ENCODE measurements at regions of chr2 and their contacts with region 1.

Region 1: GRCh38 chr2:68196120-68196716 is 38.5 kb downstream of the PNO1 start:
- DNase-seq: no peak
- CTCF ChIP-seq: peak; percentile 39

Region 2: DNA sequence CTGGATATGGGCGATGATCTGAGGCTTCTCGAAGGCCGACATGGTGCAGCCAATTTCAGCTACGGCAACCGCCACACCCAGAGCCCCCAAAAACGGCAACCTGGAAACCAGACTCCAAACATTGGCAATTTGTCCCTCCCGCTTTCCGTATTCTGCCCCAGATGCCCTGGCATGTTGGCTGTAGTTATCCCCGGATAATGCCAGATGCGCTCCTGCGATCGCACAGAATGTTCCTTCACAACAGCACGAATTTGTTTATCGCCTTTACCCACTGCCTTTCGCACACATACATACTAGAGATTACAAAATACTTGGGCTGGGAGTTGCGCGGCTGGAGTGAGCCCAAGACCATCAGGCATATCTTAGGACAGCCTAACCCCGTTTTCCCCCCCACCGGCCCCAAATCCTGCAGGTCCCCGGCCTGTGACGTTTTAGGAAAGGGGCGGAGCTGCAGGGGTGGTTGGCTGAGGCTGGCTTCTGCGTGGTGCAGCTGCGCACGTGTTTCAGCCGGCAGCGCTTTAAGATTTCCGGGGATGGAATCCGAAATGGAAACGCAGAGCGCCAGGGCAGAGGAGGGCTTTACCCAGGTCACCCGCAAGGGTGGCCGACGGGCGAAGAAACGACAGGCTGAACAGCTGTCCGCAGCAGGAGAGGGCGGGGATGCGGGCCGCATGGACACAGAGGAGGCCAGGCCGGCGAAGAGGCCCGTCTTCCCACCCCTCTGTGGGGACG is 38.6 kb before region 1 on chr2 and contains the start of gene PNO1:
- CTCF ChIA-PET with region 1: interaction called, 19 read pairs
- POLR2A ChIA-PET with region 1: no interaction called
- DNase-seq: peak; percentile 97
- CTCF ChIP-seq: no peak

Region 3: GRCh38 chr2:68176657-68177056 is 19.6 kb before region 1 on chr2:
- CTCF ChIA-PET with region 1: interaction called, 61 read pairs
- POLR2A ChIA-PET with region 1: no interaction called
- DNase-seq: no peak
- CTCF ChIP-seq: no peak

Region 4: DNA sequence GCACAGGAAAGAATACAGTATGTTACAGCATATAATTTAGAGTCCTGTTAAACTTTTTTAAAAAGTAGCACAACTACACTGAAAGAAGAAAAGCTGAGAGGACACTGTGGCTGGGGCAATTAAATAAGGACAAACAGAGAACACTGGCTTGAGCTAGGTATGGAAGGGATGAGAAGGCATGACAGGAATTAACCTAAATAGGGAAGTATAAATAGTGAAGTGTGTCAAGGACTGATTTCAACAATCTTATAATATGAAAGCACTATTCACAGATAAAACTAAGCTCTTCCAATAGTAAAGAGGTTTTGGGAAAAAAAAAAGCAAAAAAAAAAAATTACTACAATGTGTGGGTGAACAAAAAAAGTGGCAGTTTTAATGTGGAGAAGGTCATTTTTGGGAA is 10.6 kb after region 1 on chr2:
- CTCF ChIA-PET with region 1: interaction called, 58 read pairs
- POLR2A ChIA-PET with region 1: no interaction called
- DNase-seq: no peak
- CTCF ChIP-seq: no peak

Region 5: GRCh38 chr2:68225119-68225632 is 29.0 kb after region 1 on chr2:
- CTCF ChIA-PET with region 1: interaction called, 58 read pairs
- POLR2A ChIA-PET with region 1: no interaction called
- DNase-seq: peak; percentile 22
- CTCF ChIP-seq: peak; percentile 61

Region 6: DNA sequence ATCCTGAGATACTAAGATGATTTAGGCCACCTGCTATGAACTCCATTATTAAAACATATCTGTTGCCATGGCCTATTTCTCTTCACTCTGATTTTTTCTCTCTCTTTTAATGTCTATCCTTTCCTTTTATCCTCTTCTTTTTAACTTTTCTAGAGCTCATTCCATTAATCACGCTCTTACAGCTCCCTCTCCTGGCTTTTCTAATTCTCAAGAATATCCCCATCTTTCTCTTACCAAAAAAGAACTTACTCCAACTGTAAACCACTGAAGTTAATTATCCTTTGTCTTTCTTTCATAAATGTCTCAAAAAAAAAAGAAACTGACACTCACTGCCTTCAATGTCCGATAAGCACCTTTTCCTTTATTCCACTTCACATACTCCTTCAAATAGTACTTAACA is 48.2 kb after region 1 on chr2:
- CTCF ChIA-PET with region 1: interaction called, 12 read pairs
- POLR2A ChIA-PET with region 1: no interaction called
- DNase-seq: no peak
- CTCF ChIP-seq: no peak

Region 7: DNA sequence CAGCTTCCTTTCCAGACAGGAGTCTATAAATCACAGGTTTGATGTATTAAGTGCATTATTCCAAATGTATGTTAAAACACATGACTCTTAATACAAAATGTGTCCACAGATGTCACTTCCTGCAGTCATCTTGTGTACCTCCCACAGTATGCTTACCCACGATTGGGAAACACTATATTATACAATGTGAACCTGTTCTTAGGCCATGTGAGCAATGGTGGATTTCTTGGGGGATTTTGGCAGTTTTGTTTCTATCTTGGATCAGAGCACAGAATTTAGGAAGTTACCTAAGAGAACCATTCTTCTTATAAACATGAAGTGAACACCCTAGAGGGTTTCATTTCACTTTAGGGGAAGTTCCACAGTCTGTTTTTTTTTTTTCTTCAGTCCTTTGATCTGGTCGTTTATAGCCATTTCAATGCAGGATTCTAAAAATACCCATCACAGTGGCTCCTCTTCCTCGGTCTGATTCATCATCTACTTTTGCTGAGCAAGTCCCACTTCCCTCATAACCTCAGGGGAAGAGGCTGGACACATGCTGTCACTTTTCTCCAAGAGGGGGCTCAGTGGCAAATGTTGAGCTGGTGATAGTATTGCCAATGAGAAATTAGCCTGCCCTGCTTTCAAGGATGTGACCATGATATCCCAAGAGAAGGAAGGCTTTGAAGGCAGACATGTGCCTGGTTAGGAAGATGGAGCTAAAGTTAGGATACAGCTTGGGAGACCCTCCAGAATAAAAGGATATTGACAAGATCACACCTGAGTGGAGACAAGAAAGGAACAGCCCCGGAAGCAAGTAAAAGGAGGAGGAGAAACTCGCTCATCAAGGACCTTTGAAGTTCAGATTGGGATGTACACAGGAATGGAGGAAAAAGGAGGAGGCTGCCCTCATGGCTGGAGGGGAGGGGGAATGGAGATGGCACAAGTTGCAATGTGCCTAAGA is 191.5 kb after region 1 on chr2:
- CTCF ChIA-PET with region 1: no interaction called
- POLR2A ChIA-PET with region 1: no interaction called
- DNase-seq: peak; percentile 59
- CTCF ChIP-seq: no peak

Region 8: DNA sequence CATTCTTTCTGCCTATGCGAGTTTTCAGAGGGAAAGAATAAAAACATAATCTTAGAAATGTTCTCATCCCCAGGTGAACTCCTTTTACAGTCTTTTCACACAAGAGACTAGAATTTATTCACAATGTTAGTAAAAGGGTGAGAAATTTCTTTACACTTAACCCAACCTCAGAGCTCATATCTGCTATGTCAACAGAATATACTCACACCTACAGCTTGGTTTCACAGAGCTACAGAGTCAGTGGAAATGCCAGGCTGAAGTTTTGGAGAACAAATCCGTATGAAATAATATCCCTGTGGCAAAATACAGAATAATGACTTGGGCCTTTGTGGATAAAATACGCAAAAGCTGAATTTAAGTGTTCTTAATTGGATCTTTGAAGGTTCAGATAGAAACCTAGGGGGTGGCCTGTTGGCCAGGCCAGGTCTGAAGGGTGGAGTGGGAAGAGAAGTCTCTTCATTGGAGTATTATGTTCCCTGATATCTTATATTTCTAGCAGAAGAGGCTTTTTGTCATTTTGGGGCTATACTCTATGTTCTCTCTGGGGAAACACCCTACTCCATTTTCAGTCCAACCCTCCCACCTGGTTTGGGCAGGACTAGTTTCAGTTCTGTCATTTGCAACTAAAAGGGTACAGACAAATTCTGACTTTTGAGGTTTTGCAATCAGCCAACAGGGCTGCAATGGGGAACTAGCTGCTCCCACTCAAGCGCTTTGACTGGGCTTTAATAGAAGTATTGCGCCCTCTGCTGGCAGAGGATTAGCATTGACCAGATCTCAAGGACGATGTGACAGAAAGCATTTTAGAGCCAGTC is 245.2 kb after region 1 on chr2:
- CTCF ChIA-PET with region 1: interaction called, 32 read pairs
- POLR2A ChIA-PET with region 1: no interaction called
- DNase-seq: peak; percentile 78
- CTCF ChIP-seq: peak; percentile 82